CD14-positive monocyte (primary cell): ENCODE measurements at regions of chr19 and their contacts with region 1.

Region 1: DNA sequence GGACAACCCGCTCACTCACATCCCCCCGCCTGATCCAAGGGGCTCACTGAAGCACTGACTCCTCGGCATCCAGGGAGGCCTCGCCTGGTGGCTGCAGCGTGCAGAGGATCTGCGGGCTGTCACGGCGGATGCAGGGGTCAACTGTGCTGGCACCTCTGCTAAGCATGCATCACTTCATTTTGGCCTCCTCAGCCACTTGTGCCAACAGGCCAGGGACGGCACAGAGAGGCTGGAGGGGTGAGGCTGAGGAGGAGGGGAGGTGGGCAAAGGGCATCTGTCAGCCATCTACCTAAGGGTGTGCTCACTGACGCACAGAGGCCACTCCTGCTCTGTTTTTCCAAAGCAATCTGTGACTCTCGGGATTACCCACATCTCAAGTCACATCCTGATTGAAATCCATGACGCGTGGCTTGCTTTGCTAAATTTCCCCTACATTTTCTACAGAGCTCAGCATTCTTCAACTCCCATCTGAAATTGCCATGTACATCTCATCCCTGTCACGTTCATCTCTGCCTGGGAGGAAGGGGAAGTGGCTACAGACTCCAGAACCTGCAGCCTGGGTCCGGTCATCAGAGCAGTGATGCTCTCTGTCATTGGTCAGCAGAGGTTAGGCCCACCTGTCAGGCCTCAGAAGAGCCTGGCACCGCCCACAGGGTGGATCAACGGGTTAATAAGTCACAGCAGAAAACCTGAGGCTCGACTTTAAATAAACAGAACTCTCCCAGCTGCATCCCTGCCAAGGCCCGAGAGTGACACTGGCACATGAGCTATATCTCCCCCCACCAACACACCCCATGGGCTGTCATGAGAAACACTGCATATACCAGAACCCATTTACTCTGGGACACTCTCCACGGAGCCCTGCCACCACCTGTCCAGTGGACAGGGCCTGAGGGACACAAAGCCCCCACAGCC is 17.6 kb downstream of the ELL start:
- DNase-seq: peak in 2 of 3 donors; percentile 37 to 65
- H3K4me3 ChIP-seq: peak overlapping the region in 1 of 3 experiments; percentile 61
- H3K4me3 Mint-ChIP-seq: peak overlapping the region; percentile 20 to 39
- H3K27ac ChIP-seq: peak overlapping the region; percentile 95 to 96
- H3K27ac Mint-ChIP-seq: peak overlapping the region; percentile 79 to 99 (median 96)
- H3K4me1 ChIP-seq: peaks cover 95 to 100% of the 10 kb centered on the region in 2 donors
- H3K4me1 Mint-ChIP-seq: peaks cover 98% of the 10 kb centered on the region
- H3K27me3 ChIP-seq: no peaks in the 10 kb centered on the region
- H3K27me3 Mint-ChIP-seq: peaks cover 0 to 3% (median 2%) of the 10 kb centered on the region in 3 donors
- CTCF ChIP-seq: no peak

Region 2: DNA sequence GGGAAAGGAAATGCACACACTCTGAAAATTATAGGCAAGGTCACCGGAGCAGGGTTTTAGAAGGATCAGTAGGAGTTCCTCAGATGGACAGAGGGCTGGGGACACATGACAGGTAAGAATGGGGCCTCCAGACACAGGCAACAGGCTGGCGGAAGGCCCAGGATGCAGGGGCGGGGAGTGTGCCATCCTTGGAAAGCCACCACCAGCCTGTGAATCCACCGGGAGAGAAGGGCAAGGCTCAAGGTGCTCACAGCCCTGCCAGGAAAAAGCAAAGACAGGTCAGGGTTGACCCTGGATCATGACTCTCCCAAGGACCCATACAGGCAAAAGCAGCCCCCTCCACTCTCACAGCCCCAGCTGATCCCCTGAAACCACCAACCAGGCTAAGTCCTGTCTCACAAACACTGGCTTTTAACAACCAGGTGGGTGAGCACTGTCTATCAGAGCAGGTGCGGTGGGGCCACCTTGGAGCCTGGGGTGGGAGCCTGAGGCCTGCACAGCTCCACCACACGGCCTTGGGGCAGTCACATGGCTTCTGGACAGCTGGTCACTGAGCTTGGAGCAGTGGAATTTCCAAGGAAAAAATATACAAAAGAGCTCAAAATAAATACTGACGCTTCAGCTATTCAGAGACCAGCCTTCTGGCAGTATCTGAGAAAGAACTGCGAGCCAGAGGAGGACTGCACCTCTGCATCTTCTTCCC is 31.1 kb before region 1 on chr19:
- intact Hi-C with region 1: loop called in 1 of 2 experiments (anchors 5 kb)
- DNase-seq: no peak
- H3K4me3 ChIP-seq: no peak overlapping the region
- H3K4me3 Mint-ChIP-seq: no peak overlapping the region
- H3K27ac ChIP-seq: no peak overlapping the region
- H3K27ac Mint-ChIP-seq: peak overlapping the region in 4 of 7 donors; percentile 5 to 79 (median 42)
- H3K4me1 ChIP-seq: peaks cover 31 to 52% of the 10 kb centered on the region in 2 donors
- H3K4me1 Mint-ChIP-seq: peaks cover 51% of the 10 kb centered on the region
- H3K27me3 ChIP-seq: no peaks in the 10 kb centered on the region
- H3K27me3 Mint-ChIP-seq: peaks cover 0 to 3% (median 0%) of the 10 kb centered on the region in 3 donors
- CTCF ChIP-seq: no peak

Region 3: GRCh38 chr19:18603255-18603957 is 99.2 kb after region 1 on chr19:
- intact Hi-C with region 1: no loop called
- DNase-seq: peak; percentile 8 to 32 (median 20)
- H3K4me3 ChIP-seq: no peak overlapping the region
- H3K4me3 Mint-ChIP-seq: peak overlapping the region in 1 of 2 donors; percentile 81
- H3K27ac ChIP-seq: no peak overlapping the region
- H3K27ac Mint-ChIP-seq: no peak overlapping the region
- H3K4me1 ChIP-seq: no peaks in the 10 kb centered on the region
- H3K4me1 Mint-ChIP-seq: peaks cover 2% of the 10 kb centered on the region
- H3K27me3 ChIP-seq: peaks cover 47 to 68% of the 10 kb centered on the region in 2 donors
- H3K27me3 Mint-ChIP-seq: peaks cover 71 to 91% (median 77%) of the 10 kb centered on the region in 3 donors
- CTCF ChIP-seq: peak; percentile 38